ENCODE measurements at regions of chr5 and their contacts with region 1.

Region 1: GRCh38 chr5:84437673-84438315 is 53.1 kb upstream of the EDIL3 start:
- DNase-seq: peak; percentile 81
- H3K4me3 ChIP-seq: no peak overlapping the region
- H3K27ac ChIP-seq: no peak overlapping the region
- H3K4me1 ChIP-seq: peaks cover 15% of the 10 kb centered on the region
- H3K27me3 ChIP-seq: peaks cover 10% of the 10 kb centered on the region
- CTCF ChIP-seq: no peak

Region 2: DNA sequence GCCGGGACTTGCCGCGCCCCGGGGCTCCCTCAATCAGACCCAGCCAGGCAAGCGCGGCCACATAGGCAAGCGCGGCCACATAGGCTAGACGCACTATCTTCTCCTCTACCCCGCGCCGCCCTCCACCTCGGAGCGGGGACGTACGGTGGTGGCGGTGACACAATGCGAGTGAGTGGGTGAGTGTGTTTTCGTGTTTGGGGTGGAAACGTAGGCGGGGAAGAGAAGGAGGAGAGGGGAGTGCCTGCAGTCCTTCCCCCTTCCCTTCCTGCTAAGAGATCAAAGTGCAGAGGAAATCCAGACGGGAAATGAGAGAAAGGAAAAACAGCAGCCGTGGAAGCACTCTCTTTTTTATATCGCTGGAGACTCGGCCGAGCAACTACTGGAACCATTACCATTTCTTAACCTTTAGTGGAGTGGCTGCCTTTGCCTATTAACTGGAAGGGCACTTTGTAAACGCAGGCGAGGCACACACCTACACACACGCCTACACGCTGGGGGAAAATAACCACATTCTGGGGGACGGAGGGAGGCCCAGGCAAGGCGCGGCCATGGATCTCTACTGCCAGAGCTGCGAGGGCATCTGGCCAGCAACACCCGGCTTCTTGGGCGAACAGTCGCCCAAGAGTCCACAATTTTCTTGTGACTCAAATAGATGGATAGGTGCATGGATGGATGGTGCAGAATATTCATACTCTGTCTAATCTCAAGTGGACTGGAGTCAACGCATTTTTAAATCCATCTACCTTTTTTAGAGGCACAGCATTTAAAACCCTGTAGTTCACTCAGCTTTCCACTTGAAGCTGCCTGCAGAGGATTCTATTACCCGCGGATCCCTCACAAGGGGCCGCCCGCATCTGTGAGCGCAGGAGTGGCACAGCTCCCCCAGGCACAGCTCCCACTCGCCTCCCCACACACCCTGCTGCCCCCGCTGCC is 55.2 kb before region 1 on chr5:
- CTCF ChIA-PET with region 1: no interaction called
- dilution Hi-C with region 1: no loop called
- in situ Hi-C with region 1: no loop called
- intact Hi-C with region 1: loop called (anchors 5 kb)
- DNase-seq: peak; percentile 66
- H3K4me3 ChIP-seq: peak overlapping the region; percentile 32 to 51 (median 51)
- H3K27ac ChIP-seq: no peak overlapping the region
- H3K4me1 ChIP-seq: peaks cover 30% of the 10 kb centered on the region
- H3K27me3 ChIP-seq: peaks cover 24% of the 10 kb centered on the region
- CTCF ChIP-seq: no peak

Region 3: DNA sequence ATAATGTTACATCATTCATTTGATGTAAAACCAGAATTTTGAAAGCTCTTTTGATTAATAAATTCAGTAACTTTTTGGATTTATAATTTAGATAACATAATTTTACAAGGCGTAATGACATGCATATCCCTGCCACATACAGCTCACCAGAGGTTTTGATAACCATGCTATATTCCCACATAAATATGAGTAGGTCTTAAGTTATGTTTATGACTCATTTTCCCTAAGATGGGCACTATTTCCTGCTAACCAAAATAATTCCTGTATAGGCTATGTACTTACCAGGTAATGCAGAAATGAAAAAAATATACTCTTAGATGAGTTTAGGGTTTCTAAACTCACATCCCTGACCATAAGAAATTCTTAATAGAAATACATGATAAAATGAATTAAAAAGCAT is 40.8 kb after region 1 on chr5:
- CTCF ChIA-PET with region 1: no interaction called
- dilution Hi-C with region 1: no loop called
- in situ Hi-C with region 1: no loop called
- intact Hi-C with region 1: no loop called
- DNase-seq: peak; percentile 25
- H3K4me3 ChIP-seq: no peak overlapping the region
- H3K27ac ChIP-seq: no peak overlapping the region
- H3K4me1 ChIP-seq: no peaks in the 10 kb centered on the region
- H3K27me3 ChIP-seq: peaks cover 6% of the 10 kb centered on the region
- CTCF ChIP-seq: no peak

Region 4: DNA sequence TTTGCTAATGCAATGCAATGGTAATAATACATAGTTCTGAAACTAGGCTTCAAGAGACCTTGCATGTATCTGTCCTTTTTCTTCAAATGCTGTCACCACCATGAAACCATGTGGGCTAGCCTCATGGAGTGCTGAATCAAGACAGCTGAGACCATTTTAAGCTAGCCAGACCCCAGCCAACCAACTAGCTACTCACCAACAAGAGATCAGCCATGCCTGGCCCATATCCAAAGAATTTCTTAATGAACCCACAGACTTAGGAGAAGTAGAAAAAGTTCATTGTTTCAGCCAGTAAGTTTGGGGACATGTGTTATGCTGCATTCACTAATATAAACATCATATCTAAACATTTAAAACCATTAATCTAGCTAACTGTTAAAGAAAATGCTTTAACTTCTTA is 86.7 kb after region 1 on chr5:
- CTCF ChIA-PET with region 1: no interaction called
- dilution Hi-C with region 1: no loop called
- in situ Hi-C with region 1: no loop called
- intact Hi-C with region 1: no loop called
- DNase-seq: no peak
- H3K4me3 ChIP-seq: no peak overlapping the region
- H3K27ac ChIP-seq: no peak overlapping the region
- H3K4me1 ChIP-seq: no peaks in the 10 kb centered on the region
- H3K27me3 ChIP-seq: no peaks in the 10 kb centered on the region
- CTCF ChIP-seq: no peak

Measured in mammary epithelial cell (primary cell).